AG04450 (cell line): ENCODE measurements at regions of chr22 and their contacts with region 1.

Region 1: DNA sequence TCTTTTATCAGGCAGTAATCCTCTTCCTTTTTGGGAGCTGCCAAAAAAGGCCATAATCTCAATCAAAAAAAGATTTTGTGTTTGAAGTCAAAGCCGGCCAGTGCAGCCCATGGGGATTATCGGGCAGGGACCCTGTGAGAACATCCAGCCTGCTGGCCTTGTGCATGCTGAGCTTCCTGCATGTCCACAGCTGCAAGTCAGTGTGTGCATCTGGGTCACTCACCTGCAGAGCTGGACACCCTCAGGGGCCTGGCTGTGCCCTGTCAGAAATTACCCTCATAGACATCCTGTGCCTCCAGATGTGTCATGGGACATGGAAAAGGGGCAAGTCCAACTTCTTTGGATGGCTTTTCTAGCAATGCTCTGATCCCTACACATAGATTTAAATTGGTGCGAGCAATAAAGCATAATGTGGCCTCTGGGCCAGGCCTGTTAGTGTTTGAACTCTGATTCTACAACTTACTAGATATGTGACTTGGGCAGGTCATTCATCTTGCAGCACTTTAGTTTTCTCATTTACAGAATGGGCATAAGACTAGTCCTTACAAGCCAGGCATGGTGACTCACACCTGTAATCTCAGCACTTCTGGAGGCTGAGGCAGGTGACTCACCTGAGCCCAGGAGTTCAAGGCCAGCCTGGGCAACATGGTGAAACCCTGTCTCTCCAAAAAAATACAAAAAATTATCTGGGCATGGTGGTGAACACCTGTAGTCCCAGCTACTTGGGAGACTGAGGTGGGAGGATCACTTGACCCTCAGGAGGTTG is 81.6 kb upstream of the LARGE1 start:
- DNase-seq: no peak
- H3K4me3 ChIP-seq: no peak overlapping the region
- H3K27ac ChIP-seq: no peak overlapping the region
- H3K27me3 ChIP-seq: no peaks in the 10 kb centered on the region
- CTCF ChIP-seq: no peak

Region 2: GRCh38 chr22:33919391-33920196 is 82.3 kb before region 1 on chr22:
- CTCF ChIA-PET with region 1: no interaction called
- POLR2A ChIA-PET with region 1: no interaction called
- DNase-seq: no peak
- H3K4me3 ChIP-seq: peak overlapping the region; percentile 72
- H3K27ac ChIP-seq: no peak overlapping the region
- H3K27me3 ChIP-seq: no peaks in the 10 kb centered on the region
- CTCF ChIP-seq: no peak

Region 3: DNA sequence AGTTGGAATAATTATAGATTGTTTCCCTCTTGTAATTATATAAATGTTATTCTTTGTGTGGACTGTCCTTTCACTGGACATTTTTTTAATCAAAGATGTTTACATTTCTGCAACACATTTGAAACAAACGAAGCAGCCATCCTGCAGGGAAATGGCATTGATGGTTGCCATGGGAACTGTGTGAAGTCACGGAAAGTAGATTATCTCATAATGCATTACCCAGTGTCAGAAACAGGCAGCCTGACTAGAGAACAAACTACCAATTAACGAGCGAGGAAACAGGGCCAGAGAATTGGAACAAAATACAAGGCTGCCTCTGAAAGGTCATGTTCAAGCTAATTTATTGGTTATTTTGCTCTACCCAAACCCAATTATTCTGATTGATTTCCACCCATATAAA is 15.3 kb after region 1 on chr22:
- CTCF ChIA-PET with region 1: no interaction called
- POLR2A ChIA-PET with region 1: no interaction called
- DNase-seq: no peak
- H3K4me3 ChIP-seq: no peak overlapping the region
- H3K27ac ChIP-seq: no peak overlapping the region
- H3K27me3 ChIP-seq: no peaks in the 10 kb centered on the region
- CTCF ChIP-seq: no peak

Region 4: DNA sequence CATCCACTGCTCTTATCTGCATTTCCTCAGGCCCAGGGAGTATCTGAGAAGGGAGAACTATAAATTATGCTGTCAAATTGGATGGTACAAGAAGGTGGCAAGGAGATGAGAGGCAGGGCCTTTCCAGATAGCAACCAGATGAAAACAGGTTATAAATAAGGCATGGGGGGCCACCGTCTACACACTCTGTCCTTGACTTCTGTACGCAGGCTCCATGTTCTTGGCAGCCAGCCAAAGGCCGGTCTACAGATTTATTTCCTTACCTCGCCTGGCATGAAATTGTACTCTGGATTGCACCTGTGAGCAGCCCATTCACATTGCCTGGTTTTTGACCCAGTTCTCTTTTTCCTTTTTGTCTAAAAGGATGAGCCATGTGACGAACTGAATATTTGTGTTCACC is 75.5 kb after region 1 on chr22:
- CTCF ChIA-PET with region 1: interaction called, 10 read pairs
- POLR2A ChIA-PET with region 1: no interaction called
- DNase-seq: no peak
- H3K4me3 ChIP-seq: no peak overlapping the region
- H3K27ac ChIP-seq: no peak overlapping the region
- H3K27me3 ChIP-seq: no peaks in the 10 kb centered on the region
- CTCF ChIP-seq: no peak